Activated CD4-positive, alpha-beta memory T cell treated with anti-CD3 and anti-CD28 coated beads for 36 hours (primary cell): ENCODE measurements at regions of chr17 and their contacts with region 1.

Region 1: DNA sequence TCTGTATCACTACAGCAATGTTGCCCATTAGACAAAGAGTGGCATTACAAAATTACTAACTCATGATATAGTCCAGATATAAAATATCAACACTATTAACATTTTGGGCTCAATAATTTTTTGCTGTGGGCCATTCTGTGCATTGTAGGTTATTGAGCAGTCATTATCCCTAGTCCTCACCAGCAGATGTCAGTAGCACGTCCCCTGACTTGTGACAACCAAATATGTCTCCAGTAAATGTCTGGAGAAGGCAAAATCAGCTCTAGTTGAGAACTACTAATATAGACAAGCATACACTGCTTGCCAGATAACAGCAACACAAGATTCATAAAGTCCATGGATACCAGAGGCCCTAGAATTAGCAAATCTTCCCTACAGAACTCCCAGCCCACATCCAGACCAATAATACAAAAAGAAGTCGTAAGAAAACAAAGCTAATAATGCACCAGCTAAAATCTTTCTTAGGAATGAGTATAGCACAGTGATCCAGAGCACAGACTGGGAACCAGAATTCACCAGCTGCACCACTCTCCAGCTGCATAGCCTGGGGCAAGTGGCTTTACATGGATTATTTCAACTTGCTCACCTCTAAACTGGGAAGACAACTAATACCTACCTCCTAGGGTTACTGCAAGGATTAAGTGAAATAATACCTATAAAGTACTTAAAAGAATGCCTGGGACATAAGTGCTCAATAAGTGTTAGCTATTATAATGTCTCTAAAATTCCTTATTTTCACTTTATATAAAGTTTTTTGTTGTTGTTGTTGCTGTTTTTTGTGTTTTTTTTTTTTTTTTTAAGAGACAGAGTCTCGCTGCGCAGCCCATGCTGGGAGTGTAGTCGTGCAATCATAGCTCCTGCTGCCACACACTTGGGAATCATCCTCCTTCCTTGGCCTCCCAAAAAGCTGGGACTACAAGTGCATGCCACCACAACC is 23.7 kb downstream of the HELZ start:
- DNase-seq: peak; percentile 34
- H3K4me3 Mint-ChIP-seq: no peak overlapping the region
- H3K27ac Mint-ChIP-seq: no peak overlapping the region
- H3K4me1 Mint-ChIP-seq: peaks cover 35% of the 10 kb centered on the region
- H3K27me3 Mint-ChIP-seq: no peaks in the 10 kb centered on the region

Region 2: DNA sequence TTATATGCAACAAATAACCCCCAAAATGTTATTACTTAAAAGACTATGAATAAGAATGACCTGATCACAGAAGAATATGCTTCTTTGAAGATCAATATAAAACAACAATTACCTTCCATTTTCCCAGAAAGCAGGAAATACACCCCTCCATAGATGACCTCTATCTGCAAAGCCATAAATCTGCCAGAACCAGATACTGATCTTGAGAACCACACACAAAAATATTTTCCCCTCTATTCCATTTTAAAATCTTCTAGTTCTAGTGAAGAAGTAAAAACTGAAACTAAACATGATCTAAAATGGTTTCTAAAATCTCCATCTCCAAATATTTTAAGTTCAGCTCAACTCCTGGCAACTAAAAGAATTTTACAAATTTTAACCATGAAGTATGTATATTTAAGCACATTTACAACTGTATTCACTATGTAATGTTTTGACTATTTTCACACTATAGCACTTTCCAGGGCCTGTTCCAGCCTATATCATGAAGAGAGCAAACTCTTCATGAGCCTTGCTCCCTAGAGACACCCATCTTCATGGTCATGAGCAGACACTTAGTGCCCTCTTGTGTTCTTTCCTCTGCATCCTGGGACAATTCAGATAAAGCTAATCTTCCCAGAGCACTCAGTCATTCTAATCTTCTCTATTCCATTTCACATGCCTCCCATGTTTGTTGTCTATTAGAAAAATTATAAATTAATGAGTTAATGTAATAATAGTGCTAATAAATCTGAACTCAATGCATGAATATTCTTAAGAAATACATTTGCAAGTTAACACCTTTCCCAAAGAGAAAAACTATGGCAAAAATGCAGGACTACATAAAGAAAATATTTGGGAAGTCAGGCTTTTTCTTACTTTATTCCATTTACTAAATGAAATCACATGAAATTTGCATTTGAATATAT is 63.3 kb before region 1 on chr17:
- CTCF ChIA-PET with region 1: no interaction called
- POLR2A ChIA-PET with region 1: no interaction called
- intact Hi-C with region 1: no loop called
- DNase-seq: no peak
- H3K4me3 Mint-ChIP-seq: no peak overlapping the region
- H3K27ac Mint-ChIP-seq: peak overlapping the region; percentile 28
- H3K4me1 Mint-ChIP-seq: peaks cover 15% of the 10 kb centered on the region
- H3K27me3 Mint-ChIP-seq: no peaks in the 10 kb centered on the region

Region 3: GRCh38 chr17:67293251-67294203 is 72.2 kb after region 1 on chr17:
- CTCF ChIA-PET with region 1: interaction called, 96 read pairs
- POLR2A ChIA-PET with region 1: no interaction called
- intact Hi-C with region 1: loop called (anchors 1 kb)
- DNase-seq: peak; percentile 80
- H3K4me3 Mint-ChIP-seq: no peak overlapping the region
- H3K27ac Mint-ChIP-seq: no peak overlapping the region
- H3K4me1 Mint-ChIP-seq: no peaks in the 10 kb centered on the region
- H3K27me3 Mint-ChIP-seq: no peaks in the 10 kb centered on the region